BJ (cell line): ENCODE measurements at regions of chr20 and their contacts with region 1.

Region 1: DNA sequence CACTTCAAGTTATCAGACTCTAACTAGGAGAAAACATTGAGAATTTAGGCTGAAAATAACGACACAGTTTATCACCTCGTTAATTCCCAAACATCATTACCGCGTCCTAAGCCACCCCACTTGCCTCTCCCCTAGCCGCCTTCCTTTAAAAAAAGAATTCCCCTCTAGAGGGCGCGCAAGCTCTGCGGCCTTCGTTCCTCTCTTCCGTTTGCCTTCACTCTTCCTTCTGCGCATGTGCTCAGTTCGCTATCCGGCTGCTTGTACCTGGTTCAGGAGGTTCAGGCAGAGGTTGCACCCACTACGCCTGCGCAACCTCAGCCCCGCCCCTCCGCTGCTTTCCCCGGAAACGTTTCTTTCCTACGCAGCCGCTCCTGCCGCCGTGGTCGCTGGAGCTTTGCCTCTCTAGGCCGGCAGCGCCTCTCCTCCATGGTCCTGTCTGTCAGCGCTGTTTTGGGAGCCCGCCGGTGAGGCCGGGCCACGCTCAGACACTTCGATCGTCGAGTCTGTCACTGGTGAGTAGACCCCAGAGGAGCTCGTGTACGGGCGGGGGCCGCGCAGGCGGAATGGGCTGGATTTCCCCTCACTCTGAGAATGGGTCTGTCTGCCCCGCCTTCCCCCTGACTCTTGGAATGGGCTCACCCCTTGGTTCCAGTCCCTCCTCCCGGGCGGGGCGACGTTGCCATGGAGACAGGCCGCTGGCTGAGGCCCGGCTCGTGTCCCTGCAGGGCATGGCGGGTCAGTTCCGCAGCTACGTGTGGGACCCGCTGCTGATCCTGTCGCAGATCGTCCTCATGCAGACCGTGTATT is at the start of gene SYS1:
- DNase-seq: peak; percentile 94
- H3K4me3 ChIP-seq: peak within 1 kb of the TSS; percentile 89
- H3K27me3 ChIP-seq: no peaks in the 10 kb centered on the region
- CTCF ChIP-seq: peak; percentile 92
- polyA plus RNA-seq, gene SYS1: 38.8 and 71.4 TPM in 2 replicates

Region 2: DNA sequence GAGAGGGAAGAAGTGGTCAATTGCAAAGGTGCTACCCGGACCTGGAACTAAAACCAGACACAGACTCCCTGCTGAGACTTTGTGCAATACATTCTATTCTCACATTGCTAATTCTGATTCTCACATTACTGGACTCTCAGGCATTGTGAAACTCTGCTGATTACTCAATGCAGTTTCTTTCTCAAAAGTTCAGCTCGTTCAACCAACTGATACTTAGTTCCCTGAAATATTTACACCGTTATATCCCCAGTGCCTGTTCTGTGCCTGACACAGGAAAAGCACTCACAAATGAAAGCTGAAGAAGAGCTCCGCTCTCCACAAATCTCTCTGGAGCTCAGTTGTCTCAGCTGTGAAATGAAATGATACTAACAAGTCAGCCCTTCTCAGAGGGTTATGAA is 108.1 kb before region 1 on chr20:
- CTCF ChIA-PET with region 1: no interaction called
- POLR2A ChIA-PET with region 1: no interaction called
- DNase-seq: no peak
- H3K4me3 ChIP-seq: no peak overlapping the region
- H3K27me3 ChIP-seq: peaks cover 6% of the 10 kb centered on the region
- CTCF ChIP-seq: no peak

Region 3: DNA sequence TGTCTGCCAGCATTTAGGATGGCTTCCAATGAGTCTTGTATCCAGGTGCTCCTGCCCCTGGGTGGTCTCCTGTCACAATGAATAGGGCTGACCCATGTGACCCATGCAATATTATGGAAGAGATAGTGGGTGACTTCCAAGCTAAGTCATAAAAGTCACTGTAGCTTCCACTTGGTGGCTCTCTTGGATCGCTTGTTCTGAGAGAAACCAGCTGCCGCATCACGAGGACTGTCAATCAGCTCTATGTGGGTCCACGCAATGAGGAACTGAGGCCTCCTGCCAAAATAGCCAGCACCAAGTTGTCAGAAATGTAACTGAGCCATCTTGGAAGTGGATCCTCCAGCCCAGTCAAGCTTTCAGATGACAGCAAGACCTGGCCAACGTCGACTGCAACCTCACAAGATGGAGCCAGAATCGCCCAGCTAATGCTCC is 40.0 kb before region 1 on chr20:
- CTCF ChIA-PET with region 1: interaction called, 31 read pairs
- POLR2A ChIA-PET with region 1: no interaction called
- DNase-seq: no peak
- H3K4me3 ChIP-seq: no peak overlapping the region
- H3K27me3 ChIP-seq: 0 out of 2 replicates have a peak, but pooled peaks cover 1% of the 10 kb centered on the region
- CTCF ChIP-seq: no peak

Region 4: GRCh38 chr20:45337367-45338120 is 25.5 kb before region 1 on chr20:
- CTCF ChIA-PET with region 1: interaction called, 27 read pairs
- POLR2A ChIA-PET with region 1: no interaction called
- DNase-seq: peak; percentile 83
- H3K4me3 ChIP-seq: no peak overlapping the region
- H3K27me3 ChIP-seq: no peaks in the 10 kb centered on the region
- CTCF ChIP-seq: no peak

Region 5: DNA sequence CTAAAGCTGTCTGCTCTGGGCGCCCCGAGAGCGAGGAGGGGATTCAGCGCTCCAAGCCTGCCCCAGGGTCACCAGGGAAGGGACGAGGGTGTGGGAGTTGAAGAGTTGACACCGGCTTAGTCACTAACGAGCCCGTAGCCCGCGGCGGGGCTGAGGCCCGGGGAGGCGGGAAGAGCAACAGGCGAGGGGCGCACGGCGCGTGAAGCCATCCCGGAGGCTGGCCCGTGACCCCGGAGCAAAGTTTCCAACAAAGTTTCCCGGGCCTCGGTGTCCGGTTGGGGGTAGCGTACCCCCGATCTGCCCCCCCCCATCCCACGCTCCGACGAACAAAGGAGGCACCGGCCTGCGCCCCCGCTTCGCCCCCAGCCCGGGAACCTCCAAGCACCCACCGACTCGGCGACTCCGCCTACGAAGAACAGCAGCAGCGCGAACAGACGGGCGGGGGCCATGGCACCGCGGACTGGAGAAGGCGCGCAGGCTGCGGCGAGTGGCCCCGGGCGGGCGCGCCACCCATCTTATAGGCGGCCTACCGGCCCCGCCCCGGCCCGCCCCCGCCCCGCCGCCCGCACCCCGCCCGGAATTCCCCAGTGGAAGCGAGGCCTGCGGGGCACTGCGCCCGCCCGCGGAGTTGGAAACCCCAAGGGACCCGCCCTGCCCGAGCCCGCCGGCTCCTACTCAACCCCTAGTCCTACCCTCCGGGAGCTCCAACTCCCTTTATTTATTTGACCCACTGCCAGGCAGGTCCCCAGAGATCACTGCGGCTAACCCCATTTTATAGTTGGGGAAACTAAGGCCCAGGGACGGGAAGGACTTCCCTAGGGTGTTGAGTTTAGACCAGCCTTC is 14.8 kb before region 1 on chr20 and contains the start of gene SDC4:
- CTCF ChIA-PET with region 1: interaction called, 13 read pairs
- POLR2A ChIA-PET with region 1: no interaction called
- DNase-seq: no peak
- H3K4me3 ChIP-seq: peak within 1 kb of the TSS; percentile 62
- H3K27me3 ChIP-seq: no peaks in the 10 kb centered on the region
- CTCF ChIP-seq: no peak
- polyA plus RNA-seq, gene SDC4: 147 and 153 TPM in 2 replicates

Region 6: GRCh38 chr20:45373353-45374100 is 10.5 kb after region 1 on chr20:
- CTCF ChIA-PET with region 1: interaction called, 67 read pairs
- POLR2A ChIA-PET with region 1: interaction called, 4 read pairs
- DNase-seq: no peak
- H3K4me3 ChIP-seq: peak overlapping the region; percentile 33
- H3K27me3 ChIP-seq: no peaks in the 10 kb centered on the region
- CTCF ChIP-seq: peak; percentile 94

Region 7: DNA sequence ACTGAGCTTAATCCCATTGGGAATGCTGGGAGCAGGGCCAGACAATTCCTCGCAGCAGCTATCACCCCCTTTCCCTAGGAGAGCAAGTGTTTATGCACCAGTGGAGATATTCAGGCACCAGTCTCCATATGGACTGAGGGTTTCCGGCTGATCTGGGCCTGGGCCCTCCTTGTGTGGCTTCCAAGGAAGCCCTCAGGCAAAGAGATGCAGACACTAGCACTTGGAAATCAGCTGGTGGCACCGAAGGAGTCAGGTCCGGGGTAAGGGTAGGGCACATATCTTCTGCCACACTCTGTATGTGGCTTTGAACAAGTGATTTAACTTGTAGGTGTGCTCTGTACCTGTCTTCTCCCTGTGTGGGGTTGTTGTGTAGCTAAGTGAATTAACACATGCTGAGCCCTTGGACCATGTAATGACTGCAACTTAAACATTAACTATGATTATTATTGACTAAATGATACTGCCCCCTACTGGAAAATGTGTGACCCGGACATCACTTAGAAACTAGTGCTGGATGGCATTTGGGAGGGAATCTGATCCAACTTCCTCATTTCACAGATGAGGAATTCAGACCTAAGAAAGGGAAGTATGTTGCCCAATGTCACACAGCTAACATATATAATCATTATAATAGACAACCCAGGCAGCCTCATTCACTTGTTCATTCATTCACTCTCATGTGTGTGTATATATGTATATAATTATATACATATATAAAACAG is 87.3 kb after region 1 on chr20:
- CTCF ChIA-PET with region 1: interaction called, 12 read pairs
- POLR2A ChIA-PET with region 1: no interaction called
- DNase-seq: no peak
- H3K4me3 ChIP-seq: no peak overlapping the region
- H3K27me3 ChIP-seq: peaks cover 8% of the 10 kb centered on the region
- CTCF ChIP-seq: peak; percentile 55